A549 (cell line): ENCODE measurements at regions of chr11 and their contacts with region 1.

Region 1: GRCh38 chr11:62472012-62472884 is 53.4 kb downstream of the SCGB1A1 start:
- DNase-seq: peak; percentile 54 to 57
- ATAC-seq: peak; percentile 76 to 87
- H3K4me3 ChIP-seq: no peak overlapping the region
- H3K27ac ChIP-seq: peak overlapping the region; percentile 37 to 88; a peak in 5 of 6 replicates
- H3K4me1 ChIP-seq: peaks cover 29% of the 10 kb centered on the region
- CTCF ChIP-seq: no peak
- EP300 ChIP-seq: 0 out of 5 replicates have a peak, but pooled peaks of 1 of the 2 experiments have one; percentile 8
- POLR2A ChIP-seq: no peak
- RAD21 ChIP-seq: no peak

Region 2: GRCh38 chr11:62461740-62462507 is 10.3 kb before region 1 on chr11:
- CTCF ChIA-PET with region 1: interaction called, 13 read pairs
- POLR2A ChIA-PET with region 1: no interaction called
- DNase-seq: peak in 1 of 2 experiments; percentile 38
- ATAC-seq: peak; percentile 23 to 44; a peak in 3 of 6 replicates
- H3K4me3 ChIP-seq: no peak overlapping the region
- H3K27ac ChIP-seq: peak overlapping the region in 1 of 2 experiments; percentile 43; a peak in 3 of 6 replicates
- H3K4me1 ChIP-seq: peaks cover 27% of the 10 kb centered on the region
- CTCF ChIP-seq: no peak
- EP300 ChIP-seq: no peak
- POLR2A ChIP-seq: no peak
- RAD21 ChIP-seq: no peak